ENCODE measurements at regions of chr2 and their contacts with region 1.

Region 1: GRCh38 chr2:162113776-162114168 is 38.3 kb downstream of the GCG start:
- DNase-seq: peak in 1 of 5 donors; percentile 17
- H3K4me3 ChIP-seq: no peak overlapping the region
- H3K27ac ChIP-seq: no peak overlapping the region
- H3K4me1 ChIP-seq: peaks cover 0 to 6% (median 3%) of the 10 kb centered on the region in 3 donors
- H3K27me3 ChIP-seq: no peaks in the 10 kb centered on the region
- CTCF ChIP-seq: no peak

Region 2: GRCh38 chr2:161722547-161723503 is 390.9 kb before region 1 on chr2:
- intact Hi-C with region 1: no loop called
- DNase-seq: peak in 2 of 5 donors; percentile 3 to 13
- H3K4me3 ChIP-seq: no peak overlapping the region
- H3K27ac ChIP-seq: no peak overlapping the region
- H3K4me1 ChIP-seq: no peaks in the 10 kb centered on the region
- H3K27me3 ChIP-seq: no peaks in the 10 kb centered on the region
- CTCF ChIP-seq: no peak

Region 3: DNA sequence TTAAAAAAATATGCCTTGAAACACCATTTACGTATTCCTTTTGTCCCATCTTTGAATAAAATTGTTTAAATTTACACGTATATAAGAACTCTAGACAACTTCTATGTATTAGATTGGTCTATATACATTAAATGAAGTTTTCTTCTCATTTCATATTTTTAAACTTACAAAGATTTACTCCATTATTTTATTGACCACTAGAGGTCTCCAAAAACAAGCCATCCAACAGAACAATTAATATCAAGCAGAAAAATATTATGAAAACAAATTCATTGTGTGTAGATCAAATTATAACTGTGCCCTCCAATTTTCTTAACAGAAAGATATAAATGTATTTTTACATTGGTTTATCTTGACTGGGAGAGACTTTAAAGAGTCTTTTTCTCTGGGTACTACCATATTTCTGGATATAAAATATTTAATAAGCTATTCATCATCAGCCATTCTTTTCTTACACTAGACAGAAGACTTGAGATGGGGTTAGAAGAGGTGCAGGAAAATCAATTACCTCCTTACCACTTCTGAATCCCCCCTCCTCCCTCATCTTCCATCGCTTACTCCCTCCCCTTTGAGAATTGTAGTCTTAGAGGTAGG is 106.2 kb before region 1 on chr2:
- intact Hi-C with region 1: loop called (anchors 10 kb)
- DNase-seq: peak in 1 of 5 donors; percentile 27
- H3K4me3 ChIP-seq: no peak overlapping the region
- H3K27ac ChIP-seq: no peak overlapping the region
- H3K4me1 ChIP-seq: no peaks in the 10 kb centered on the region
- H3K27me3 ChIP-seq: no peaks in the 10 kb centered on the region
- CTCF ChIP-seq: peak; percentile 42

Region 4: DNA sequence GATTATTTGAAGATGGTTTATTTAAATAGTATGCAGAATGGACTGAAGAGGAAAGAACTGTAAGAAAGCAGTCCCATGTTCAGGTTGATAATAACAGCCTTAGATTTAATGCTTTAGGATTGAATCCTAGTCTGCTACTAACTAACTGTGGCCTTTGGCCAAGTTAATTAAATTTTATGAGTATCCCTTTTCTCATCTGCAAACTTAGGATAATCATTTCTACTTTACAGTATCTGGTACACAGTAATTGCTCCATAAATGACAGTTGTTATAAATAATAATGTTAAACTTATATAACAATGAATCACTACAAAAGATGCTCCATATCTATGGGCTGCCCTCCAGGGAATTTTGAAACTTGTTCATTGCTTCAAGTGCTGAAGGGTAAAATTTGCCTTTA is 88.4 kb after region 1 on chr2:
- intact Hi-C with region 1: no loop called
- DNase-seq: no peak
- H3K4me3 ChIP-seq: no peak overlapping the region
- H3K27ac ChIP-seq: no peak overlapping the region
- H3K4me1 ChIP-seq: no peaks in the 10 kb centered on the region
- H3K27me3 ChIP-seq: no peaks in the 10 kb centered on the region
- CTCF ChIP-seq: no peak

Measured in kidney (tissue), 22 donors.